A549 (cell line): ENCODE measurements at regions of chr20 and their contacts with region 1.

Region 1: GRCh38 chr20:57596998-57597939 is 23.0 kb downstream of the ZBP1 start:
- DNase-seq: peak; percentile 53 to 75
- ATAC-seq: peak; percentile 67 to 91
- H3K4me3 ChIP-seq: peak overlapping the region; percentile 34
- H3K27ac ChIP-seq: peak overlapping the region; percentile 56 to 83; a peak in 4 of 6 replicates
- H3K4me1 ChIP-seq: peaks cover 15% of the 10 kb centered on the region; the same call in 2 of the 3 replicates
- CTCF ChIP-seq: peak; percentile 97
- EP300 ChIP-seq: no peak
- POLR2A ChIP-seq: no peak
- RAD21 ChIP-seq: peak; percentile 93 to 99

Region 2: GRCh38 chr20:57498425-57499400 is 98.6 kb before region 1 on chr20:
- CTCF ChIA-PET with region 1: interaction called, 12 read pairs
- POLR2A ChIA-PET with region 1: no interaction called
- DNase-seq: peak in 1 of 2 experiments; percentile 40
- ATAC-seq: peak; percentile 84 to 89
- H3K4me3 ChIP-seq: no peak overlapping the region
- H3K27ac ChIP-seq: no peak overlapping the region
- H3K4me1 ChIP-seq: no peaks in the 10 kb centered on the region
- CTCF ChIP-seq: peak; percentile 45
- EP300 ChIP-seq: no peak
- POLR2A ChIP-seq: no peak
- RAD21 ChIP-seq: peak; percentile 54 to 56

Region 3: DNA sequence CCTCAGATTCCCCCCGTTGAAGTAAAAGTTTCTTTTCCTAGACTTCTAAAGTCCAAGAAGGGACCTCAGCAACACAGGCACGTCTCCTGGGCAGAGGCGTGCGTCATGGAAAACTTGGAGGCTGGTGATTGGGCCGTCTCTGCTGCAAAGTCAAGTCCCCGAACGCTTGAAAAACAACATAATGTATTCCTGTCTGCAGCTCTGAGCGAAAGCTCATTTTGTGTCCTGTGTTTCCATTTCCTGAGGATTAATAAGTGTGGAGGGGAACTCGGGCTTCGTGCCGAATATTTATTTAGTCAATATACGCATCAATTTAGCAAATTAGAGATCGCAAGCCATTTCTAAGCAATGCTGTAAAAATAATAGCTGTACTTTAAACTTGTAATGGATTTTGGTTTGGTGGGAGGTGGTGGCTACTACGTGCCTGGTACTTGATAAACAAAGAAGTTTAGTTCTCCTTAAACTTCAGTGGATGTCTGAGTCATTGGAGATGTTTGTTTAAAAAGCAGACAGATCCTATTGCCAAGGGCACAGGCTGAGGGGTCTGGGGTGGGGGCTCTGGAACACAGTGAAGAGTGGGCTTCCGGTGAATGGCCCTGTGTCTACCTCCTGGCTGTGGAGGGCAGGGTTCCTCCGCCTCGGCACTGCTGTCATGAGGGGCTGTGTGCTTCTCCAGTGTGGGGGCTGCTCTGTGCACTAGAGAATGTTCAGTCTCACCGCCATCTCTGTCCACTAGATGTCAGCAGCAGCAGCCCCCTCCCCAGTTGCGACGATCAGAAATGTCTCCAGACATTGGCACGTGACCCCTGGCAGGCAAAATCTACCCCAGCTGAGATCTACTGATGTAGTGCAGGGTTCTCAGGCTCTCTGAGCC is 14.6 kb before region 1 on chr20:
- CTCF ChIA-PET with region 1: interaction called, 49 read pairs
- POLR2A ChIA-PET with region 1: no interaction called
- DNase-seq: peak in 1 of 2 experiments; percentile 24
- ATAC-seq: peak; percentile 38 to 79; a peak in 4 of 6 replicates
- H3K4me3 ChIP-seq: peak overlapping the region; percentile 34; the same call in 2 of the 3 replicates
- H3K27ac ChIP-seq: peak overlapping the region; percentile 30 to 40; a peak in 3 of 6 replicates
- H3K4me1 ChIP-seq: peaks cover 14% of the 10 kb centered on the region
- CTCF ChIP-seq: peak; percentile 45
- EP300 ChIP-seq: no peak
- POLR2A ChIP-seq: no peak
- RAD21 ChIP-seq: peak in 1 of 2 experiments; percentile 17; a peak in 1 of 5 replicates

Region 4: DNA sequence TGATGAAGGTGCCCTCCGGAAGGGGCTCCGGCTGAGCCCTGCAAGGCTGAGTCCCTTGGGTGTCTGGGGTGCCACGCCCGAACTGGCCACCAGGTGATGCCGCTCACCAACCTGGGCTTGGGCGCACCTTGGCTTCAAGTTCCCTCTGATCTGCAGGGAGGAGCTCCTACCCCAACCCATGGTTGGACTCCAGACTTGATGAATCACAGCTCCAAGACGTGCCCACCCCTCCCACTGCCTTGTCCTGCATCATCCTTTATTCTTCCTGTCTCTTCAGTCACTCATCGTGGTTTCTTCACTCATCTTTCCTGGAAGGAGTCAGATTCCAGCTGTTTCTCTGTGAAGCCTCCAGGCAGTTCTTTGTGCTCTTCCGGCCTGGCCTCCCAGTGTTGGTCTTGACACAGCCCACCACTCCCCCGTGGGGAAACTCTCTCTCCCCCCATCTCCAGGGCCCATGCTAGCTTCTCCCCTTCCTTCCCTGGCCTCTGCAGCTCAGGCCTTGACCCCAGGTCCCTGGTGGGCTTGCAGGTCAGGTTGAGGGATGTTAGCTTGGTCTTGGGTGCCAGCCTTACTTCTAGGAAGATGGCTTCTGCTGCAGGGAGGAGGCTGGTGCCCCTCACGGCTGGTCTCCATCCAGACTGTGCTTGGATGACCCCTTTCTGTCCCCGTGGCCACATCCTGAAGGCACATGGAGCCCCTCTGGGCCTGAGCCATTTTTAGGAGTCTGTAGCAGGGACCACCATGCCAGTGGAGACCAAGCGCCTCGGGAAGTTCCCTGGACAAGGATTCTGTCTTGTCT is 25.5 kb after region 1 on chr20:
- CTCF ChIA-PET with region 1: interaction called, 47 read pairs
- POLR2A ChIA-PET with region 1: no interaction called
- DNase-seq: peak; percentile 88 to 91
- ATAC-seq: peak; percentile 90 to 98
- H3K4me3 ChIP-seq: no peak overlapping the region
- H3K27ac ChIP-seq: peak overlapping the region; percentile 67 to 82
- H3K4me1 ChIP-seq: peaks cover 25% of the 10 kb centered on the region
- CTCF ChIP-seq: peak; percentile 87
- EP300 ChIP-seq: no peak
- POLR2A ChIP-seq: no peak
- RAD21 ChIP-seq: peak; percentile 95 to 96

Region 5: DNA sequence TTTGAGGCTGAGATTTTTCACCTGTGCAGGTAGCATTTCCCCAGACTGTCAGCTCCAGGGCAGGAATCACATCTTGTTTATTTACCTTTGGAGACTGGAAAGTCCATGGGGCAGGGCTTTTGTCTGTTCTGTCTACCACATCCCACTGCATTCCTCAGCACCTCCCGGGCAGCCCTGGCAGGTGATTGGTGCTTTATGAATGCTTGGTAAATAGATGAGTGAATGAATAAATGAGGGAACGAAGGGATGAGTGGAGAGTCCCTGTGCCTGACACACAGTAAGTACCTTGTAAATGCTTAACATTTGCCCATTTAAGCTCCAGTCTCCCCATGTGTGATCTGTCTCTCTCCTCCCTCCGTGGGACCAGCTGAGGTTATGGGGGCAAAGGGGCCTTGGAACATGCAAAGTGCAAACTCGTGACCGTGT is 182.2 kb after region 1 on chr20:
- CTCF ChIA-PET with region 1: no interaction called
- POLR2A ChIA-PET with region 1: no interaction called
- DNase-seq: peak in 1 of 2 experiments; percentile 57
- ATAC-seq: peak in 1 of 2 experiments; percentile 67; a peak in 3 of 6 replicates
- H3K4me3 ChIP-seq: no peak overlapping the region
- H3K27ac ChIP-seq: peak overlapping the region; percentile 47 to 62; a peak in 5 of 6 replicates
- H3K4me1 ChIP-seq: peaks cover 20% of the 10 kb centered on the region
- CTCF ChIP-seq: no peak
- EP300 ChIP-seq: no peak
- POLR2A ChIP-seq: no peak
- RAD21 ChIP-seq: no peak

Region 6: GRCh38 chr20:58192567-58192966 is 595.3 kb after region 1 on chr20:
- CTCF ChIA-PET with region 1: interaction called, 17 read pairs
- POLR2A ChIA-PET with region 1: no interaction called
- DNase-seq: no peak
- ATAC-seq: peak in 1 of 2 experiments; percentile 58; a peak in 2 of 6 replicates
- H3K4me3 ChIP-seq: no peak overlapping the region
- H3K27ac ChIP-seq: no peak overlapping the region
- H3K4me1 ChIP-seq: no peaks in the 10 kb centered on the region
- CTCF ChIP-seq: peak; percentile 46
- EP300 ChIP-seq: no peak
- POLR2A ChIP-seq: no peak
- RAD21 ChIP-seq: peak; percentile 44 to 45; a peak in 3 of 5 replicates

Region 7: GRCh38 chr20:58219301-58219700 is 622.0 kb after region 1 on chr20:
- CTCF ChIA-PET with region 1: interaction called, 56 read pairs
- POLR2A ChIA-PET with region 1: no interaction called
- DNase-seq: peak in 1 of 2 experiments; percentile 51
- ATAC-seq: peak in 1 of 2 experiments; percentile 39; a peak in 2 of 6 replicates
- H3K4me3 ChIP-seq: no peak overlapping the region
- H3K27ac ChIP-seq: 0 out of 6 replicates have a peak overlapping the region, but pooled peaks of 1 of the 2 experiments have one; percentile 8
- H3K4me1 ChIP-seq: no peaks in the 10 kb centered on the region
- CTCF ChIP-seq: no peak
- EP300 ChIP-seq: no peak
- POLR2A ChIP-seq: no peak
- RAD21 ChIP-seq: no peak